CD14-positive monocyte (primary cell): ENCODE measurements at regions of chr5 and their contacts with region 1.

Region 1: GRCh38 chr5:14879937-14880589 is 8.5 kb upstream of the ANKH start:
- DNase-seq: no peak
- H3K4me3 ChIP-seq: no peak overlapping the region
- H3K4me3 Mint-ChIP-seq: no peak overlapping the region
- H3K27ac ChIP-seq: no peak overlapping the region
- H3K27ac Mint-ChIP-seq: peak overlapping the region in 1 of 7 donors; percentile 78
- H3K4me1 ChIP-seq: no peaks in the 10 kb centered on the region
- H3K4me1 Mint-ChIP-seq: no peaks in the 10 kb centered on the region
- H3K27me3 ChIP-seq: peaks cover 5 to 15% of the 10 kb centered on the region in 2 donors
- H3K27me3 Mint-ChIP-seq: peaks cover 8 to 22% (median 14%) of the 10 kb centered on the region in 3 donors
- CTCF ChIP-seq: no peak

Region 2: DNA sequence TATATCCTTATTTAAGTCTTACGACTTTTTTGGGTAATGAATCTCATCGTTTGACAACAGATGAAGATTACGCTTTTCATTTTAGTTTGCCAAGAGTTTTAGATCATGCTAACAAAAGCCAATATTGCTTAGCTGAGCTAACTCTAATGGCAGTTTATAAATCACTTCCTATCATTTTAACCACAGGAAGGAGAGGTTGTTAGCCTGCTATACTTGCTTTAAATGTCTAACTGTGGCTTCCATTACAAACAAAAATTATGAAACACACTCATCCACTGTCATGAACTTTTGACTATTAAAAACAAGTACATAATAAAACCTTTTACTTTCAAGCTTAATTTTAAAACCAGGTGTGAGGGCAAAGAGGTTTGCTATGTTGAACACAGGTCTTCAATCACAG is 45.3 kb after region 1 on chr5:
- intact Hi-C with region 1: loop called in 1 of 2 experiments (anchors 5 kb)
- DNase-seq: peak in 1 of 3 donors; percentile 12
- H3K4me3 ChIP-seq: no peak overlapping the region
- H3K4me3 Mint-ChIP-seq: no peak overlapping the region
- H3K27ac ChIP-seq: no peak overlapping the region
- H3K27ac Mint-ChIP-seq: peak overlapping the region in 4 of 7 donors; percentile 32 to 86 (median 52)
- H3K4me1 ChIP-seq: peaks cover 3 to 21% of the 10 kb centered on the region in 2 donors
- H3K4me1 Mint-ChIP-seq: peaks cover 19% of the 10 kb centered on the region
- H3K27me3 ChIP-seq: no peaks in the 10 kb centered on the region
- H3K27me3 Mint-ChIP-seq: peaks cover 6 to 14% (median 9%) of the 10 kb centered on the region in 3 donors
- CTCF ChIP-seq: no peak

Region 3: GRCh38 chr5:14958196-14958595 is 78.1 kb after region 1 on chr5:
- intact Hi-C with region 1: no loop called
- DNase-seq: no peak
- H3K4me3 ChIP-seq: no peak overlapping the region
- H3K4me3 Mint-ChIP-seq: no peak overlapping the region
- H3K27ac ChIP-seq: no peak overlapping the region
- H3K27ac Mint-ChIP-seq: no peak overlapping the region
- H3K4me1 ChIP-seq: no peaks in the 10 kb centered on the region
- H3K4me1 Mint-ChIP-seq: peaks cover 7% of the 10 kb centered on the region
- H3K27me3 ChIP-seq: no peaks in the 10 kb centered on the region
- H3K27me3 Mint-ChIP-seq: peaks cover 1 to 7% (median 2%) of the 10 kb centered on the region in 3 donors
- CTCF ChIP-seq: no peak

Region 4: DNA sequence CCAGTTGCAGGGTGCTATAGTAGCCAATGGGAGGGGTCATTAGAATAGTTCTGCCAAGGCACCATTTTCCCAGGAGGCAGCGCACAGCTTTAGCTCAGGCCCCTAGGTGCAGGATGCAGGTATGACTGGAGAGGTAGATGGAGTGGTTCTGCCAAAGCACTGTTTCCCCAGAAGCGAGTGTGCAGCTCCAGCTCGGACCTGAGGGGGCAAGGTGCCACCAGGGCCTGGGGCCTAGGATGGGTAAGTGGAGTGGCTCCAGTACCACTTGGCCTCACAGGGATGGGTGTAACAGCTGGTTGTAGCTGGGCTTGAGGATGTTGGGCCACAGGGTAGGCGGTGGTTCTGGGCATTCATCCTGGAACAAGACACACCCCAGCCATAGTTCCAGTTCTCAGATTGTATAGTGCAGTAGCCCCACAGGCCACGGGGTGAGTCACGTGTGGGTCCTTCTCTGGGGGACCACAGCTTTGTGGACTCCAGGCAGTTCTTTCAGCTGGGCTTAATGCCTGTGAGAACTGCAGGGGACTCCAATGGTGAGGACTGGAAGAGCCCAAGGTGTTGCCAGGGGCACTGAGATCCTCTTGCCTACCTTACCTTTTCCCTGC is 177.0 kb after region 1 on chr5:
- intact Hi-C with region 1: no loop called
- DNase-seq: no peak
- H3K4me3 ChIP-seq: no peak overlapping the region
- H3K4me3 Mint-ChIP-seq: no peak overlapping the region
- H3K27ac ChIP-seq: no peak overlapping the region
- H3K27ac Mint-ChIP-seq: no peak overlapping the region
- H3K4me1 ChIP-seq: no peaks in the 10 kb centered on the region
- H3K4me1 Mint-ChIP-seq: no peaks in the 10 kb centered on the region
- H3K27me3 ChIP-seq: no peaks in the 10 kb centered on the region
- H3K27me3 Mint-ChIP-seq: peaks cover 0 to 7% (median 1%) of the 10 kb centered on the region in 3 donors
- CTCF ChIP-seq: no peak